Lower leg skin (tissue), 4 donors: ENCODE measurements at regions of chr4 and their contacts with region 1.

Region 1: GRCh38 chr4:13645075-13645474 is 17.6 kb upstream of the BOD1L1 start:
- DNase-seq: no peak
- H3K4me3 ChIP-seq: no peak overlapping the region
- CTCF ChIP-seq: no peak
- POLR2A ChIP-seq: no peak

Region 2: GRCh38 chr4:15077969-15078368 is 1432.9 kb after region 1 on chr4:
- intact Hi-C with region 1: loop called (anchors 5 kb)
- DNase-seq: no peak
- H3K4me3 ChIP-seq: no peak overlapping the region
- CTCF ChIP-seq: no peak
- POLR2A ChIP-seq: no peak